ENCODE measurements at regions of chr10 and their contacts with region 1.

Region 1: GRCh38 chr10:98309366-98310355 is 41.7 kb upstream of the LOXL4 start:
- ATAC-seq: peak; percentile 79 to 92 (median 86)
- H3K4me3 ChIP-seq: peak overlapping the region in 1 of 5 donors; percentile 18
- H3K27ac ChIP-seq: peak overlapping the region; percentile 66 to 88
- H3K4me1 ChIP-seq: peaks cover 18 to 34% of the 10 kb centered on the region in 2 donors

Region 2: DNA sequence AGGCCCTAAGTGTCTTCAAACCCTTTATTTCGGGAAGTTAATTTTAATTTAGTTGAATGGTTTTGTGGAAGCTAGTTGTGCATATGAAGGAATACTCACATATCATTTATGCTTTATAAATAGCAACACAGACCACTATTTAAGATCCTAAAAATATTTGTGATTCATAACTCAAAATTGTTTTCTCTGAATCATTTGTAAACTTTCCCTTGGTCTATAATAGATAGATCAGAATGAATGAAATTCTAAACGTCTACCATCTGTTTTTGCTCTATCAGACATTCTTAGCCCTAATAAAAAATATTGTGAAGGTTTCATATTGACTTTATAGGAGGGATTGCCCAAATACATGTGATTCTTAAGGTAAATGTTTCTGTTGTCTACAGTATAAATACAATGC is 85.2 kb before region 1 on chr10:
- in situ Hi-C with region 1: loop called in 1 of 9 experiments (anchors 25 kb)
- ATAC-seq: no peak
- H3K4me3 ChIP-seq: no peak overlapping the region
- H3K27ac ChIP-seq: no peak overlapping the region
- H3K4me1 ChIP-seq: no peaks in the 10 kb centered on the region

Region 3: GRCh38 chr10:98242823-98243222 is 66.8 kb before region 1 on chr10:
- in situ Hi-C with region 1: loop called in 1 of 9 experiments (anchors 10 kb)
- ATAC-seq: peak in 4 of 8 experiments; percentile 22 to 49 (median 30)
- H3K4me3 ChIP-seq: no peak overlapping the region
- H3K27ac ChIP-seq: no peak overlapping the region
- H3K4me1 ChIP-seq: peaks cover 15 to 17% of the 10 kb centered on the region in 2 donors